CD14-positive monocyte (primary cell): ENCODE measurements at regions of chr11 and their contacts with region 1.

Region 1: DNA sequence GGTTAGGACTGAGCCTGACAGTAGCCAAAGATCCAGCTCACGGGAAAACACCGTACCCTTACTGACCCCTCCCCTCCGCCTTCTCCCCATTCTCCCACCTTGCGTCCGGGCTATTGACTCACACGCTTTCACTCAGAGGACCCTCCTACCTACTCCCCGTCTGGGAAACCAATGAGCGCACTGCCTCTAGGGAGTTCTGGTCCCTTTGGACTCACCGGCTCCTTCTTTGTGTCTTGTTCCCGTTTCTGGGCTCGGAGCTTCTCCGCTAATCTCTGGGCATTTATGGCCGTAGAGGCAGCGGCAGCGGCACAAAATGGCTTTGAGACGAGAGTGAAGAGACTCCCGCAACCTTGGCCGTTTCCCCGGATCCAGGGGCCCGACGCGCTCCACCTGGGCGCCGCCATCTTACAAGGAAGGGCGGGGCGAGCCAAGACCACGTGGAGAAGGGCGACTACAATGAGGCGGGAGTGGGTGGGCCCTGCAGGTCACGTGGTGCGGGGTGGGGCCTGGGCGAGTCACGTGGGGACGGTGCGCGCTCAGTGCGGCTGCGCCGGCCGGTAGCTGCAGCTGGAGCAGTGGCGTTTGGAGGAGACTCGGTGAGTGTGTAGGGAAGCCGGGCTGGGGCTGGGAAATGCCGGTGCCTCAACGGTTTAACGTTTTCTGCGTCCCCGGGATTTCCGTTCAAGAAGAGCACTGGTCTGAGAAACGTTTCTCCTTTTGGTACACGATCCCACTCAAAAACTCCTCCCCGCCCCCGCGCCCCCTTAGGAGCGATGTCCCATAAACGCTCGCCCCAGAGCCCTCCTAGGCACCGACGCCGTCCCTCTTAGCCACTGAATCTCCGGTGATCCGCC is at the starts of genes FAM118B and RPUSD4:
- DNase-seq: peak; percentile 93 to 97 (median 95)
- H3K4me3 ChIP-seq: peak within 1 kb of the TSS; percentile 62 to 98 (median 95)
- H3K4me3 Mint-ChIP-seq: peak within 1 kb of the TSS; percentile 97 to 99
- H3K27ac ChIP-seq: peak within 1 kb of the TSS; percentile 31 to 80
- H3K27ac Mint-ChIP-seq: peak within 1 kb of the TSS; percentile 90 to 95 (median 92)
- H3K4me1 ChIP-seq: peaks cover 45 to 47% of the 10 kb centered on the region in 2 donors
- H3K4me1 Mint-ChIP-seq: peaks cover 48% of the 10 kb centered on the region
- H3K27me3 ChIP-seq: no peaks in the 10 kb centered on the region
- H3K27me3 Mint-ChIP-seq: peaks cover 0 to 3% (median 0%) of the 10 kb centered on the region in 3 donors
- CTCF ChIP-seq: no peak
- polyA plus RNA-seq, gene FAM118B: 13.6 to 18.7 (median 16.5) TPM
- polyA plus RNA-seq, gene RPUSD4: 9.0 to 15.5 (median 10.3) TPM

Region 2: DNA sequence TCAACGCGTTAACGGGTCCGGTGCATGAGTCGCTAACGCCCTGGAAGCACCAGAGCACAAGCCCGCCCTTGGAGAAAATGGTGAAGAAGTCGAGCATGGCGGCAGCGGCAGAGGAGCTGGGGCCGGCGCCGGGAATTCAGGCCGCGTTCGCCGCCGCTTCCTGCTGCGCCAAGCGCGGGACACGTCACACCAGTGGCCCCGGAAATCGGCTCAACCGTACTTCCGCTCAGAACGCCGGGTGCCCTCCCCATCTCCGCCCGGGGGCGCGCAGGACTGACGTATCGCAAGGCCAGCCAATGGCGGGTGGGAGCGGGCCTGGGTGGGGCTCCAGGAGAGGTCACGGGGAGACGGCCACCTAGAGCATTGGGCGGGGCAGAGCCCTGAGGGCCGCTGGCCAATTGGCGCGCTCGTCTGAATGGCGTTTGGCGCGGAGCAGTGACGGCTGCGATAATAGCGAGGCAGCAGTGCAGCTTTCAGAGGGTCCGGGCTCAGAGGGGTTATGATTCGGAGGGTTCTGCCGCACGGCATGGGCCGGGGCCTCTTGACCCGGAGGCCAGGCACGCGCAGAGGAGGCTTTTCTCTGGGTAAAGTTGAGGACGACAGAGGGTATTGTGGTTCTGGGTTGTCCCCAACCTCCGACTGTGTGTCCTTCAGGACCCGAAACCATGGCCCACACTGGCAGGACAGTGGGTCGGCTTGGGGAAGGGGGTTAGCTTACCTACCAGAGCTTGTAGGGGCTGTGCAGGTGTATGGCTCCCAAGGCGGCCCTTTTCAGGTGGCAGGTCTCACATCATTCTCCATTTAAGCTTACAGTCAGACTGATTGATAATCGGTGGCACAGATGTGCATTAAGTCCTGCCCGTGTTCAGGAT is 57.5 kb after region 1 on chr11 and contains the starts of genes FOXRED1 and SRPRA:
- intact Hi-C with region 1: loop called (anchors 2 to 5 kb)
- DNase-seq: peak; percentile 99 to 100 (median 99)
- H3K4me3 ChIP-seq: peak within 1 kb of the TSS; percentile 87 to 93 (median 89)
- H3K4me3 Mint-ChIP-seq: peak within 1 kb of the TSS; percentile 94 to 95
- H3K27ac ChIP-seq: peak within 1 kb of the TSS; percentile 76 to 99
- H3K27ac Mint-ChIP-seq: peak within 1 kb of the TSS; percentile 97 to 98 (median 97)
- H3K4me1 ChIP-seq: peaks cover 15 to 17% of the 10 kb centered on the region in 2 donors
- H3K4me1 Mint-ChIP-seq: peaks cover 18% of the 10 kb centered on the region
- H3K27me3 ChIP-seq: no peaks in the 10 kb centered on the region
- H3K27me3 Mint-ChIP-seq: no peaks in the 10 kb centered on the region
- CTCF ChIP-seq: no peak
- polyA plus RNA-seq, gene FOXRED1: 15.2 to 18.0 (median 15.4) TPM
- polyA plus RNA-seq, gene SRPRA: 68.7 to 123 (median 87.6) TPM